Activated T-helper 2 cell treated with anti-CD3 and anti-CD28 coated beads, Interferon-gamma antibody, Interleukin-2, Interleukin-4, amounts not matched to agents 10 μg/mL and 5 μg/mL and 100 μg/mL, durations not matched to agents 14 hours and 24 hours and 36 hours (primary cell): ENCODE measurements at regions of chr11 and their contacts with region 1.

Region 1: GRCh38 chr11:78564490-78565467 is 9.9 kb downstream of the NARS2 start:
- DNase-seq: peak; percentile 26
- H3K4me3 Mint-ChIP-seq: no peak overlapping the region
- H3K27ac Mint-ChIP-seq: peak overlapping the region; percentile 76
- H3K4me1 Mint-ChIP-seq: peaks cover 53% of the 10 kb centered on the region
- H3K27me3 Mint-ChIP-seq: no peaks in the 10 kb centered on the region

Region 2: DNA sequence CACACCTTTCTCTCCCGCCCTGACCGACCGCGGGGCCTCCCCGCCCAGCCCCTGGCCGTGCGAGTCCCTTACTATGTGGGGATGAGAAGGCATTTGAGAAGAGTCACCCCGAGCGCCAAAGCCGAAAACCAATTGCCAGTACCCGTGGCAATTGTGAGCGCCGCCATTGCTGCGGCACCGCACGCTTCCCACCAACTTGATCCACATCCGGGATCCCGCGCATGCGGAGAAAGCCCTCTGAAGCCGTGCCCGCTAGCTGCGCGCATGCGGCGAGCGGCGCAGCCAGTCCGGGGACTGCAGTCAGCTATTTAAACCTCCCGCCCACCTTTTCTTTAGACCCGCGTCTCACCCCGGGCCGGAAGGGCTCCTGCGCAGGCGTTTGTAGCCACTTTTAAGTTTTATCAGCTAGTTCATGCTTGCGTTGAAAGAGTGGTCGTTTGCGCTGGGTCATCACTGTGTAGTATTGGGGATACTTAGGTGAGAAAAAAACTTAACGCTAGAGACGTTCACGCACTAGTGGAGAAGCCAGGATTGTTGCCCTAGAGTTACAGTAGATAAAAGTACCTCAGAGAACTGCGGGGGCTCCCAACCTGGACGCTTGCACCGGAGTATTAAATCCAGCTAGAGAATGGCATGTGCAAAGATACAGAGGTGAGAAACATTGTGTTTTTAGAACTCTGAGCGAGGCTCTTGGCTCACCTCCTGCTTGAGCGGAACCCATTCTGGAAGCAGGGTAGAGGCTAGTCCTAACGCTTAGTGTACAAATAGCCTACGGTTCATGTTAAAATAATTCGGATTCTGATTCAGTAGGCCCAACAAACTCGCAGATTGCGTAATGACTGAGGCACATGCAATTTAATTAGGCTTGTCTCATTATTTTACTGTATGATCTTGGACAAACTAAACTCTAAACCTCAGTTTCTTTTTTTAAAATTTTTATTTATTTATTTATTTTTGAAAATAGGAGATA is 425.1 kb before region 1 on chr11 and contains the start of gene ALG8:
- intact Hi-C with region 1: loop called (anchors 5 kb)
- DNase-seq: peak; percentile 97
- H3K4me3 Mint-ChIP-seq: peak within 1 kb of the TSS; percentile 89
- H3K27ac Mint-ChIP-seq: peak within 1 kb of the TSS; percentile 83
- H3K4me1 Mint-ChIP-seq: peaks cover 44% of the 10 kb centered on the region
- H3K27me3 Mint-ChIP-seq: no peaks in the 10 kb centered on the region
- total RNA-seq, gene ALG8: 58.6 and 70.1 TPM in 2 replicates

Region 3: DNA sequence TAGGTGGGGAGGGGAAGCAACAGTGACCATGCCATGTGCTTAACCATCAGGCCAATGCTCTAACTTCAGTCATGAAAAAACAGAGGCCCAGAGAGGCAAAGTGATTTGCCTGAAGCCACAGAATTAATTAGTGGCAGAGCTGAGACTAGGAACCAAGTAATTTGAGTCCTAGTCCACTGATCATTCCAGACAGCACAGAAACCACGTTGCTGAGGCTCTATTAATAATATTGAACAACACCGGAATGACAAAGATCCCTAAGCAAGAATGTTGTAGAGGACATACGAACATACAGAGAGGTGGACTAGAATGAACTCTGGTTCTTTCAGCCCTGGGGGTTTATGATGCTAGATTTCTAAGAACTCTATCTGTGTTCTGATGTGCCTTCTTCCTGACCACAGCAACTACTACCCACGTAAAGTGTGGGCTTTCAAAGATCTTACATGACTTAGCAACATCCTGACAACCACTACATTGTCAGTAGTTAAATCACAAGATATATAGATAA is 239.5 kb before region 1 on chr11:
- intact Hi-C with region 1: loop called (anchors 2 kb)
- DNase-seq: peak; percentile 41
- H3K4me3 Mint-ChIP-seq: peak overlapping the region; percentile 10
- H3K27ac Mint-ChIP-seq: peak overlapping the region; percentile 85
- H3K4me1 Mint-ChIP-seq: peaks cover 93% of the 10 kb centered on the region
- H3K27me3 Mint-ChIP-seq: no peaks in the 10 kb centered on the region

Region 4: GRCh38 chr11:78465169-78465942 is 99.4 kb before region 1 on chr11:
- intact Hi-C with region 1: loop called (anchors 5 kb)
- DNase-seq: peak; percentile 63
- H3K4me3 Mint-ChIP-seq: peak overlapping the region; percentile 52
- H3K27ac Mint-ChIP-seq: peak overlapping the region; percentile 70
- H3K4me1 Mint-ChIP-seq: peaks cover 41% of the 10 kb centered on the region
- H3K27me3 Mint-ChIP-seq: no peaks in the 10 kb centered on the region

Region 5: GRCh38 chr11:78548911-78549590 is 15.7 kb before region 1 on chr11:
- intact Hi-C with region 1: no loop called
- DNase-seq: no peak
- H3K4me3 Mint-ChIP-seq: no peak overlapping the region
- H3K27ac Mint-ChIP-seq: no peak overlapping the region
- H3K4me1 Mint-ChIP-seq: peaks cover 18% of the 10 kb centered on the region
- H3K27me3 Mint-ChIP-seq: no peaks in the 10 kb centered on the region